Heart right ventricle (tissue), 16 donors: ENCODE measurements at regions of chr5 and their contacts with region 1.

Region 1: DNA sequence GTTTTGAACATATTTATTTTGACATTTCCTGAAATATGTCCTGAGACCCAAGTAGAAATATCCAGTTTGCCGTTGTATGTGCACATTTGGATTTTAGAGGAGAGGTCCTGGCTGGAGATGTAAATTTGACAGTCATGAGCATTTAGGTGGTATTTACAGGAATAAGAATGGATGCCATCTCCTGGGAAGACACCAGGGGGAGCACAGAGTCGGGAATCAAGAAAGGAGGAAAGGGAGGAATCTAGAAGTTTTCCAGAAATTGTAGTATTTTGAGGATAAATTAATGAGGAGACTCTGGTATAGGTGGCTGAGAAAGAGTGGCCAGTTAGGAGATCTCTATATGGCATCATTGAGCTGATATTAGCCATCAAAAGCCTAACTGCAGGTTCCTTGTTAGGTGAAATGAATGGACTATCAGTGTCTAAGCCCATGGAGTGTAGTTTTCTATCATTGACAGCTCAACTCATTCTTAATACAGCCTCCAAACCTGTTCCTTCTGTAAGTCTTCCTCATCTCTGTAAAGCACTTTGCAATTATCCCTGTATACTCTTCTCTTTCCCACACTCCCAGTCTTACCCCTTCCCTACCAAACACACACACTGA is 7.2 kb downstream of the GAPT start:
- DNase-seq: peak in 1 of 2 donors; percentile 36
- ATAC-seq: peak in 1 of 8 donors; percentile 52
- H3K4me3 ChIP-seq: no peak overlapping the region
- H3K27ac ChIP-seq: no peak overlapping the region
- H3K4me1 ChIP-seq: peaks cover 0 to 20% (median 0%) of the 10 kb centered on the region in 9 donors
- H3K27me3 ChIP-seq: peaks cover 0 to 12% (median 0%) of the 10 kb centered on the region in 7 donors
- CTCF ChIP-seq: peak; percentile 57 to 82 (median 74)

Region 2: DNA sequence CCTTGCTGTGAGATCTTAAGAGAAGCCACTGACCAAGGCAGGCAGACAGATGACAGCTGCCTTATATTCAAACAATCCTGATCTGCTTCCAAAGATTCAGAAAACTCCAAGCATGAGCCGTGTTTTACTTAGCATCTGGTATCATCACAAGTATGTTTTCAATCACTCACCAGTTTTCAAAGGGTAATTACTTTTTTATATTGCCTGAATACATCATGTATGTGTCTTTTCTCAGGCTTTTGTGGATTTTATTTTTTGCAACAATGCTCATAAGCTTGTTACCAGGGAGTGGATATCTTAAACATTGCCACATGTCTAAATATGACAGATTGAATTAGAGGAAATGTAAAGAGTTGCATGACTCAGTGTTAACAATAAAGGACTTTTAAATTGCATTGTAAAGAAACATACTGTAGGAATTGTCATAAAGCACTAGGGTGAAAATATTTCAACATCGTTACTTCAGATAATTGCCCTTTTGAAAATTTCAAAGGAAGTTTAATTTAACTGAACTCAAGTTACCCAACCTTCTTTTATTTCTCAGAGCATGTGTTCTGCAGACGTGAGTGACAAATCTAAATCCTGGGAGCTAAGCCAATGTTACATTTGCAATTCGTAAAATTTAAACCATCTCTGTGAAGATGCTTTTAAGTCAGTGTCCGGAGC is 364.7 kb before region 1 on chr5:
- intact Hi-C with region 1: no loop called
- DNase-seq: no peak
- ATAC-seq: peak in 2 of 8 donors; percentile 22 to 42
- H3K4me3 ChIP-seq: no peak overlapping the region
- H3K27ac ChIP-seq: no peak overlapping the region
- H3K4me1 ChIP-seq: peaks cover 0 to 25% (median 11%) of the 10 kb centered on the region in 9 donors
- H3K27me3 ChIP-seq: no peaks in the 10 kb centered on the region
- CTCF ChIP-seq: no peak

Region 3: DNA sequence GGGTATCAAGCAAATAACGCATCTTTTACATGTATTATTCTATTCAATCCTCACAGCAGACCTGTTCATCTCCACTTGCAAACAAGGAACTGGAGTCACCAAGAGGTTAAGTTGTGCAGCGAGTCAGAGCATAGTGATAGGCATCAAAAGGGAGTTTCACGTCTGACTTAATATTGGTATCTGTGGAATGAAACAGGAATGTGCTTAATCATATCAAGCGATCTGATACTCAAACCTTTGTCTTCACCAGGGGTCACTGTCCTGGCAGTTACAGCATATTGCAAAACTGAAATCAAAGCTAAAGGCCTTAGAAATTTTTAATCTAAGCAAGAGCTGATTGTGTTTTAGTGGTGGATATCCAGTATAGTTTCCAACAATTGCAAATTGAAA is 310.2 kb before region 1 on chr5:
- intact Hi-C with region 1: no loop called
- DNase-seq: no peak
- ATAC-seq: peak in 5 of 8 donors; percentile 34 to 73 (median 47)
- H3K4me3 ChIP-seq: no peak overlapping the region
- H3K27ac ChIP-seq: peak overlapping the region in 4 of 10 donors; percentile 3 to 33 (median 16)
- H3K4me1 ChIP-seq: peaks cover 0 to 27% (median 12%) of the 10 kb centered on the region in 9 donors
- H3K27me3 ChIP-seq: no peaks in the 10 kb centered on the region
- CTCF ChIP-seq: peak in 5 of 9 donors; percentile 7 to 35 (median 18)

Region 4: DNA sequence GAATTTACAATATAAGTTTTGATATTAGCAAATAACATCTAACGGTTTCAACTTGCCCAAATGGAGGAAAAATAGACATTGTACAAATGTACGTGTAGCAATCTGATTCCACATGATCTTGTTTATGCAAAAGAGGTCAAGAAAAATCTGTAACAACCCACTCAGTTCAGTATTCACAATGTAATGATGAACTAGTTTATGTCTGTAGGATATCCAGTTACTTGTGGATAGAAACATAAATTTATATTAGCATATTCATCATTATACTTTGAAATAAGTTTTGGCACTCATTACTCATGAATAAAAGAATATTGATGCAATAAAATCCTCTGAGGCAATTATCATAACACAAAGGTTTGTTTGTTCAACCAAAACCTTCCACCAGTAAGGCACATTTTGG is 66.6 kb before region 1 on chr5:
- intact Hi-C with region 1: no loop called
- DNase-seq: no peak
- ATAC-seq: no peak
- H3K4me3 ChIP-seq: no peak overlapping the region
- H3K27ac ChIP-seq: no peak overlapping the region
- H3K4me1 ChIP-seq: no peaks in the 10 kb centered on the region
- H3K27me3 ChIP-seq: no peaks in the 10 kb centered on the region
- CTCF ChIP-seq: no peak

Region 5: GRCh38 chr5:58717303-58718007 is 219.0 kb after region 1 on chr5:
- intact Hi-C with region 1: loop called in 3 of 10 experiments (anchors 10 kb)
- DNase-seq: no peak
- ATAC-seq: no peak
- H3K4me3 ChIP-seq: no peak overlapping the region
- H3K27ac ChIP-seq: no peak overlapping the region
- H3K4me1 ChIP-seq: peaks cover 0 to 6% (median 0%) of the 10 kb centered on the region in 9 donors
- H3K27me3 ChIP-seq: peaks cover 0 to 4% (median 0%) of the 10 kb centered on the region in 7 donors
- CTCF ChIP-seq: peak in 2 of 9 donors; percentile 10 to 16

Region 6: GRCh38 chr5:58818462-58818861 is 320.0 kb after region 1 on chr5:
- intact Hi-C with region 1: loop called in 2 of 10 experiments (anchors 10 kb)
- DNase-seq: no peak
- ATAC-seq: no peak
- H3K4me3 ChIP-seq: no peak overlapping the region
- H3K27ac ChIP-seq: no peak overlapping the region
- H3K4me1 ChIP-seq: no peaks in the 10 kb centered on the region
- H3K27me3 ChIP-seq: no peaks in the 10 kb centered on the region
- CTCF ChIP-seq: no peak

Region 7: GRCh38 chr5:58849921-58850667 is 351.7 kb after region 1 on chr5:
- intact Hi-C with region 1: loop called (anchors 1 to 10 kb)
- DNase-seq: no peak
- ATAC-seq: peak in 1 of 8 donors; percentile 38
- H3K4me3 ChIP-seq: no peak overlapping the region
- H3K27ac ChIP-seq: no peak overlapping the region
- H3K4me1 ChIP-seq: peaks cover 0 to 4% (median 0%) of the 10 kb centered on the region in 9 donors
- H3K27me3 ChIP-seq: peaks cover 0 to 6% (median 0%) of the 10 kb centered on the region in 7 donors
- CTCF ChIP-seq: peak; percentile 16 to 68 (median 56)